ENCODE measurements at regions of chr5 and their contacts with region 1.

Region 1: DNA sequence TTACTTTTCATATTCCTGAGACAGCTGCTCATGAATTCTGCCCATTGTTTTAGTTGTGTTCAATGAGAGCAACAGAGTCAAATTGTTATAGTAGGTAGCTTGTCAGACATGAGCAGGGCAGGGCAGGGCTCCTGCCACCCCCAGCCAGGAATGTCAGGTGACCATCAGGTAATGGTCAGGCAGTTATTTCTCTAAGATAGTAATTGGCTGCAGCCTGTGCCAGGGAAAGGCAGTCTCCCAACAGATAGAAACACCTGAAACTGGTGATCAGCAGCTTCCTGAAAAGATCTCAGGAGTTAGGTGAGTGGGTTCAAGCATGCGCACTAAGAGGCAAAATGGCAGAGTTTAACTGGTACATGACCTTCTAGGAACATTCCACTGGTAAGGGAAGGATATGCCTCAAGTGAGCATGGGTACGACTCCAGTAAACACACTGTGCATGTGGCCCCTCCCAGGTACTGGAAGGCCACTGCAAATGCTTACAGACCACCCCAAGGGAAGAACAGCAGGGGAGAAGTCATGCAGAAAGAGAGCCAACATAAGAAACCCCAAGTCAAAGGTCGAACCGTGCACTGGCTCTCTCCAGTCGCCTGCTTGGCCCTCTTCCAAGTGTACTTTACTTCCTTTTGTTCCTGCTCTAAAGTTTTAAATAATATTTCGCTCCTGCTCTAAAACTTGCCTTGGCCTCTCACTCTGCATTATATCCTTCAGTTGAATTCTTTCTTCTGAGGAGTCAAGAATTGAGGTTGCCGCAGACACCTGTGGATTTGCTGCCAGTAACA is 25.1 kb downstream of the CARTPT start:
- DNase-seq: no peak
- CTCF ChIP-seq: no peak

Region 2: GRCh38 chr5:71757590-71758543 is 13.7 kb after region 1 on chr5:
- CTCF ChIA-PET with region 1: interaction called, 19 read pairs
- POLR2A ChIA-PET with region 1: no interaction called
- DNase-seq: peak; percentile 49
- CTCF ChIP-seq: peak; percentile 80

Region 3: DNA sequence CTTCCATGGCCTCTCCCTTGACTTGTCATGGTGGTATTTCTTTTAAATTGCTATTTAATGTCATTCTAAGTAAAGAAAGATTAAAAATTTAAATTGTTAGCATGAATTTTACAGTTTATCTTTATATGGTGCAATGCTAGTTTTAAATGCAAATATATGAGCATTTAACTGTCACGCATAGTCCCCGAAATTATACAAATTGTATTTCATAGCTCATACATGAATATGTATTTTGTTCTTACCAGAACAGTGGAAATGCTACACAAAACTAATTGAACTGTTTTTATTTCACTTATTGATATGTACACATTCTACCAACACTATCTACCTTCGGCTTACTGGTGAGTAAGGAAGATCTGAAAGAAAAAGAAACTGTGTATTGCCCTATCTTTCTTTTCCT is 100.7 kb after region 1 on chr5:
- CTCF ChIA-PET with region 1: no interaction called
- POLR2A ChIA-PET with region 1: no interaction called
- DNase-seq: no peak
- CTCF ChIP-seq: no peak

Measured in GM10248 (cell line).